Naive thymus-derived CD4-positive, alpha-beta T cell (primary cell): ENCODE measurements at regions of chr10 and their contacts with region 1.

Region 1: DNA sequence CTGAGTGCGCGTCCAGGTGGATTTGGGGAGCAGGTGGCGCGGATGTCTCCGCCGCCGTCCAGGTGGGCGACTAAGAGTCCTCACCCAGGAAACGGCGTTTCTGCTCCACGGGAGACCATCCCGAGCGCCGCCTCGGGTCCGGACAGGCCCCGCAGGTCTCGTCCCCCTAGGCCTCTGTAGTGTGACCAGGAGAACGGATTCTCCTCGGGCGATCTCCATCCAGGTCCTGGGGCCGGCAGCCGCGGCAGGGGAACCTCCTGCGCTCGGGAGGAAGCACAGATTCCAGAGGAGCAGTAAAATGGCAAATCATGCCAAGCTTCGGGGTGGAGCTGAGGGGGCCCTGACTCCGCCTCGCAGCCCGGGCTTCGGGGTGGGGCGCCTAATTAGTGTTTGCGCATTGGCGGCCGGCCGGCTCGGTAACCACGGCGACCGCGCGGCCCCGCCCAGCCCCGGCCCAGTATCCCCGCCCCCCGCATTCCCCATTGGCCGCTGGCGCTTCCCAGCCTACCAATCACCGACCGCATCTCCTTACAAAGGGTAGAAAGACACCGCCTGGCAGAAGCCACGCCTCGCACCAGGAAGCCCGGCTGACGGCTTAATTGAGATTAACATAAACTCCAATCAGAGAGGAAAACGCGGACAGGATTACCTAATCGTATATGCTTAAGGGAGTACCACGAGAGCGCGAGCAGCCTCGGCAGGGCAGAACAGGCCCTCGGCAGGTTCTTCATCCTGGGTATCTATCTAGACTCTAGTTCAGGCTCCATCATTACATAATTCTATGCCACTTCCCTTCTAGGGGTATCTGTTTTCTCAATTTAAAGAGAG is 168.6 kb downstream of the ARHGAP12 start:
- DNase-seq: peak; percentile 85 to 98 (median 94)
- ATAC-seq: peak; percentile 97
- H3K4me3 ChIP-seq: peak overlapping the region; percentile 95
- H3K4me3 Mint-ChIP-seq: peak overlapping the region; percentile 81 to 96 (median 91)
- H3K27ac ChIP-seq: peak overlapping the region; percentile 87
- H3K27ac Mint-ChIP-seq: peak overlapping the region; percentile 90 to 100 (median 98)
- H3K4me1 ChIP-seq: peaks cover 6 to 7% of the 10 kb centered on the region in 2 donors
- H3K4me1 Mint-ChIP-seq: peaks cover 8 to 24% (median 16%) of the 10 kb centered on the region in 7 donors
- H3K27me3 ChIP-seq: no peaks in the 10 kb centered on the region
- H3K27me3 Mint-ChIP-seq: no peaks in the 10 kb centered on the region

Region 2: GRCh38 chr10:31031558-31032257 is 728.3 kb before region 1 on chr10 and contains the start of gene ZNF438:
- CTCF ChIA-PET with region 1: no interaction called
- POLR2A ChIA-PET with region 1: interaction called, 9 read pairs
- intact Hi-C with region 1: loop called in 1 of 2 experiments (anchors 1 kb)
- DNase-seq: peak; percentile 93 to 99 (median 96)
- ATAC-seq: peak; percentile 92
- H3K4me3 ChIP-seq: peak within 1 kb of the TSS; percentile 84
- H3K4me3 Mint-ChIP-seq: peak within 1 kb of the TSS; percentile 89 to 94 (median 92)
- H3K27ac ChIP-seq: peak within 1 kb of the TSS; percentile 96
- H3K27ac Mint-ChIP-seq: peak within 1 kb of the TSS; percentile 93 to 99 (median 99)
- H3K4me1 ChIP-seq: peaks cover 5% of the 10 kb centered on the region in 2 donors
- H3K4me1 Mint-ChIP-seq: peaks cover 7 to 34% (median 14%) of the 10 kb centered on the region in 7 donors
- H3K27me3 ChIP-seq: no peaks in the 10 kb centered on the region
- H3K27me3 Mint-ChIP-seq: no peaks in the 10 kb centered on the region
- total RNA-seq, gene ZNF438: 3.9 to 5.8 (median 4.0) TPM

Region 3: GRCh38 chr10:31318854-31319601 is 441.0 kb before region 1 on chr10 and contains the start of gene ZEB1:
- CTCF ChIA-PET with region 1: no interaction called
- POLR2A ChIA-PET with region 1: interaction called, 3 read pairs
- intact Hi-C with region 1: loop called (anchors 1 kb)
- DNase-seq: peak; percentile 64 to 96 (median 91)
- ATAC-seq: peak; percentile 79
- H3K4me3 ChIP-seq: peak within 1 kb of the TSS; percentile 89
- H3K4me3 Mint-ChIP-seq: peak within 1 kb of the TSS; percentile 91 to 100 (median 99)
- H3K27ac ChIP-seq: peak within 1 kb of the TSS; percentile 99
- H3K27ac Mint-ChIP-seq: peak within 1 kb of the TSS; percentile 96 to 100 (median 99)
- H3K4me1 ChIP-seq: peaks cover 11 to 27% of the 10 kb centered on the region in 2 donors
- H3K4me1 Mint-ChIP-seq: peaks cover 14 to 48% (median 41%) of the 10 kb centered on the region in 7 donors
- H3K27me3 ChIP-seq: no peaks in the 10 kb centered on the region
- H3K27me3 Mint-ChIP-seq: peaks cover 0 to 2% (median 0%) of the 10 kb centered on the region in 5 donors
- total RNA-seq, gene ZEB1: 65.5 to 126 (median 80.9) TPM

Region 4: GRCh38 chr10:31677195-31678138 is 82.5 kb before region 1 on chr10:
- CTCF ChIA-PET with region 1: no interaction called
- POLR2A ChIA-PET with region 1: no interaction called
- intact Hi-C with region 1: no loop called
- DNase-seq: no peak
- ATAC-seq: no peak
- H3K4me3 ChIP-seq: no peak overlapping the region
- H3K4me3 Mint-ChIP-seq: no peak overlapping the region
- H3K27ac ChIP-seq: no peak overlapping the region
- H3K27ac Mint-ChIP-seq: no peak overlapping the region
- H3K4me1 ChIP-seq: no peaks in the 10 kb centered on the region
- H3K4me1 Mint-ChIP-seq: no peaks in the 10 kb centered on the region
- H3K27me3 ChIP-seq: no peaks in the 10 kb centered on the region
- H3K27me3 Mint-ChIP-seq: peaks cover 0 to 10% (median 6%) of the 10 kb centered on the region in 5 donors

Region 5: DNA sequence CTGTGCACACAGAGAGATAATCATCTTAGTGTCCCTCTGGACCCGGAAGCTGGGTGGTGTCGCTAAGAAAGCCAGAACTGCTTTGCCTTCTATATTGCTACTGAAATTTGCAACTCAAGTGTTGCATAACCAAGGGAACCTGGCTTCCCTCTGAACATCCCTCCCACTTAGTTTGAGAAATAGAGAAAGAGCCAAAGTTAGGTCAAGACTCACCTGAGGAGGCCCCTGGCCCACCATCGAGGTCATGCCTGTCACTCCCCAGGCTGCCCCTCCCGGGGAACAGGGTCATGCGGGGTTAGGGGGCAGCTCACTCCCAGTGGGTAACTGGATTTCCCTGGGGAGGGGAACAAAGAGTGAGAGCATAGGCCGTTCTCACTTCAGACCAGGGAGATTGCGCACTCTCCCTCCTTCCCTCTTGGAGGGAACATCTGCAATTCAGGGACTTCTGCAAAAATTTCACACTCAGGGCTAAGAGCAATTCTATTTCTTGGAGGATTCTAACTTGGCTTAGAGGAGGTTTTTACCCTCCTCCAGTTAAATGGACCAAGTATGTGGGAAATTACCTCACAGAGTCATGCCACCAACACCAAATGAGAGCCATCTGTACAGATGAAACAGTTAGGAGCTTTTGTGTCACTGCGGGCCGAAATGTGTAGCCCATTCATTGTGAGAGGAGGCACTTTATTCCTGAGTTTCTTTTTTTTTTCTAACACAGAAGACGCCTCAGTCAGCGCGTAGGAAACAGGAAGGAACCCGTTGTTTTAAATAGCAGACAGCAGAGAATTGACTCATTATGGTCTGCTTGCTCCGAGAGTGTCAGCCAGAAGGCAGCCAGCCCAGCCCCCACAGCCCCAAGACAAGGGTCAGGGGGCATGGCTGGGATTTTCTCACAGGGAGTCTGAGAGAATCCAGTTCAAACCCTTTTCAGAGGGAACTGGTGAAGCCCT is 52.6 kb before region 1 on chr10:
- CTCF ChIA-PET with region 1: no interaction called
- POLR2A ChIA-PET with region 1: no interaction called
- intact Hi-C with region 1: loop called in 1 of 2 experiments (anchors 5 kb)
- DNase-seq: peak in 2 of 9 donors; percentile 13 to 64
- ATAC-seq: peak; percentile 82
- H3K4me3 ChIP-seq: no peak overlapping the region
- H3K4me3 Mint-ChIP-seq: peak overlapping the region; percentile 7 to 65 (median 54)
- H3K27ac ChIP-seq: no peak overlapping the region
- H3K27ac Mint-ChIP-seq: peak overlapping the region in 8 of 9 donors; percentile 11 to 85 (median 48)
- H3K4me1 ChIP-seq: peaks cover 0 to 11% of the 10 kb centered on the region in 2 donors
- H3K4me1 Mint-ChIP-seq: peaks cover 11 to 28% (median 16%) of the 10 kb centered on the region in 7 donors
- H3K27me3 ChIP-seq: no peaks in the 10 kb centered on the region
- H3K27me3 Mint-ChIP-seq: no peaks in the 10 kb centered on the region

Region 6: DNA sequence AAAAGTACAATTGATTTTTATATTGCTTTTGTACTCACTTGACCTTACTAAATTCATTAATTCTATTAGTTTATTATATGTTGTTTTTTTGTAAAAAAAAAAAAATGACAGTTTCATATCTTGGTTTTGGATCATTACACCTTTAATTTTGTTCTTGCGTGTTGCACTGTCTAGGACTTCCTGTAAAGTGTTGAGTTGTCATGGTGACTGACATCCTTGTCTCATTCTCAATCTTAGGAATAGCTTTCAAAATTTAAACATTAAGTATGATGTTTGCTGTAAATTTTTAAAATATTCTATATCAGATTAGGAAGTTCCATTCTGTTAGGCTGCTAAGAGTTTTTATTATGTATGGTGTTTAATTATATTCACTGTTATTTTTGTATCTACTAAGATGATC is 29.5 kb after region 1 on chr10:
- CTCF ChIA-PET with region 1: no interaction called
- POLR2A ChIA-PET with region 1: no interaction called
- intact Hi-C with region 1: loop called in 1 of 2 experiments (anchors 2 kb)
- DNase-seq: peak in 4 of 9 donors; percentile 11 to 30 (median 20)
- ATAC-seq: peak; percentile 74
- H3K4me3 ChIP-seq: no peak overlapping the region
- H3K4me3 Mint-ChIP-seq: no peak overlapping the region
- H3K27ac ChIP-seq: no peak overlapping the region
- H3K27ac Mint-ChIP-seq: no peak overlapping the region
- H3K4me1 ChIP-seq: peaks cover 0 to 3% of the 10 kb centered on the region in 2 donors
- H3K4me1 Mint-ChIP-seq: peaks cover 3 to 15% (median 11%) of the 10 kb centered on the region in 7 donors
- H3K27me3 ChIP-seq: peaks cover 0 to 4% of the 10 kb centered on the region in 2 donors
- H3K27me3 Mint-ChIP-seq: peaks cover 5 to 21% (median 10%) of the 10 kb centered on the region in 5 donors

Region 7: GRCh38 chr10:32055813-32056600 is 296.0 kb after region 1 on chr10 and contains the start of gene KIF5B:
- CTCF ChIA-PET with region 1: no interaction called
- POLR2A ChIA-PET with region 1: no interaction called
- intact Hi-C with region 1: loop called (anchors 1 kb)
- DNase-seq: peak; percentile 77 to 95 (median 90)
- ATAC-seq: peak; percentile 87
- H3K4me3 ChIP-seq: peak within 1 kb of the TSS; percentile 71
- H3K4me3 Mint-ChIP-seq: peak within 1 kb of the TSS; percentile 94 to 99 (median 96)
- H3K27ac ChIP-seq: peak within 1 kb of the TSS; percentile 83
- H3K27ac Mint-ChIP-seq: peak within 1 kb of the TSS; percentile 90 to 97 (median 93)
- H3K4me1 ChIP-seq: peaks cover 30 to 34% of the 10 kb centered on the region in 2 donors
- H3K4me1 Mint-ChIP-seq: peaks cover 33 to 55% (median 47%) of the 10 kb centered on the region in 7 donors
- H3K27me3 ChIP-seq: no peaks in the 10 kb centered on the region
- H3K27me3 Mint-ChIP-seq: no peaks in the 10 kb centered on the region
- total RNA-seq, gene KIF5B: 42.2 to 66.0 (median 46.3) TPM

Region 8: DNA sequence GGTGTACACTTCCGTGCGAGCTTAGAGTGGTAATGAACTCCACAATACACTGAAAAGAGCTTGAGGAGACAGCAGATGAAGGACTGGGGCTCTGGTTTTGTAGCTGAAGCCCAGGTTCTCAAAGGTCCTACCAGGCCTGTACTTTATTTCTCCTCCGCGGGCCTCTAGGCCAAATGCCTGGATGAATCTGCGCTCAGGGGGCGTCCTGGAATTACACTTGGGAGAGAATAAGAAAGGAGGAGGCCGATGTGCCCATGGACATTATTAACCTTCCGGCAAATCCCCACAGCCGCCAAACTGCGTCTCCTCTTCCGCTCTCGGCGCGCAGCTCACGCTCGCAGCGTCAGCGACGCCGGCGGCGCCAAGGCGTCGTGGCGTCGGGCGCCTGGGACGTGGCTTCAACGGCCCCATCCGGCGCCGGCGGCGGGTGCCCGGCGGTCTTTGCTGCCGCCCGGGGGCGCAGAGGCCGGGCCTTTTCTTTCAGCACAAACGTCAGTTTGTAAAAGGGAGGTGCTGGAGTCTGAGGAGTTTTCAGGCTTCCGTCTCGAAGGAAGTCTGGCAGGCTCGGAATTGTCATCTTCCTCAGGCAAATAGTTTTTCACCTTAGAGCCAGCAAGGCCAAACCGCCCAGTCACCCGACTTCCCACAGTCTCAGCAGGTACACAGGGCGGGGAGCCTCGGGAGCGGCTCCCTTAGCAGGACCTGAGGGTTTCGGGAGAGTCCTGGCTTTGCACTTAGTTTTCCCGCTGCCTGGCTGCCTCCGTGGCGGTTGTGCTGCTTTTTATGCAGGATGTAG is 685.9 kb after region 1 on chr10 and contains the start of gene CCDC7:
- CTCF ChIA-PET with region 1: no interaction called
- POLR2A ChIA-PET with region 1: no interaction called
- intact Hi-C with region 1: loop called in 1 of 2 experiments (anchors 2 kb)
- DNase-seq: peak; percentile 78 to 90 (median 88)
- ATAC-seq: peak; percentile 98
- H3K4me3 ChIP-seq: peak within 1 kb of the TSS; percentile 79
- H3K4me3 Mint-ChIP-seq: peak within 1 kb of the TSS; percentile 85 to 98 (median 94)
- H3K27ac ChIP-seq: peak within 1 kb of the TSS; percentile 95
- H3K27ac Mint-ChIP-seq: peak within 1 kb of the TSS; percentile 96 to 100 (median 99)
- H3K4me1 ChIP-seq: peaks cover 8 to 9% of the 10 kb centered on the region in 2 donors
- H3K4me1 Mint-ChIP-seq: peaks cover 2 to 35% (median 25%) of the 10 kb centered on the region in 7 donors
- H3K27me3 ChIP-seq: no peaks in the 10 kb centered on the region
- H3K27me3 Mint-ChIP-seq: peaks cover 0 to 4% (median 0%) of the 10 kb centered on the region in 5 donors
- total RNA-seq, gene CCDC7: 19.5 to 98.7 (median 69.5) TPM